Activated B cell treated with CpG ODN at 0.5 μM for 24 hours (primary cell): ENCODE measurements at regions of chr18 and their contacts with region 1.

Region 1: GRCh38 chr18:47930931-47931717 is 665 bp upstream of the SMAD2 start:
- DNase-seq: peak; percentile 93
- ATAC-seq: peak; percentile 80
- H3K4me3 Mint-ChIP-seq: peak overlapping the region; percentile 84
- H3K27ac Mint-ChIP-seq: peak overlapping the region; percentile 87
- H3K4me1 Mint-ChIP-seq: peaks cover 36% of the 10 kb centered on the region
- H3K27me3 Mint-ChIP-seq: no peaks in the 10 kb centered on the region
- CTCF ChIP-seq: no peak

Region 2: DNA sequence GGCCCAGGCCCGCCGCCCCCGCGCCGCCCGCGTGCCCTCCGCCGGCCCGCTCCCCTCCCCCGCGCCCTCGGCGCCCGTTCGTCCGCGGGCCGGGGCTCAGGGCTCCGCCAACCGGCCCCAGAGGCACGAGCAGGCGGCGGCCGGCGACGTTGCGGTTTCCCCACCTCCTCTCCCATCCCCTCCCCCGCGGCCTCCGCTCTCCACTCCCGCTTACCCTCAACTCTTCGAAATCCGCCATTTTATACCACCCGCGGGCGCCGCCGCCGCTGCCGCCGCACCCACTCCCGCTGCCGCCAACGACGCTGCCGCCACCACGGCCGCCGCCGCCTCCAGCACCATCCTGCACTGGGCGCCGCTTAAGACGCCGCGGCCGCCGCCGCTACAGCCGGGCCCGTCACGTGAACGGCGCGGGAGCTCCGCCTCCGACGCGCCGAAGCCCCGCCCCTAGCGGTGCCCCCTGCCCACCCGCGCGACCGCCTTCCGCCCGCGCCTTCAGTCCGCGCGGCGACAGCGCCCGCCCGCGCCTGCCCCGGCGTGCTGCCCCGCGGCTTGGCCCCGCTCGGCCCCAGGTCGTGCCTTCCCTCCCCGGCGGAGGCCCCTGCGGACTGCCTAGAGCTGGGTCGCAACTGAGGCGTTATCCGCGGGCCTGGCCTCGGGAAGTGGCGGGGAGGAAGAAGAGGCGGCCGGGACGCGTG is 1013.9 kb before region 1 on chr18 and contains the starts of genes KATNAL2 and PIAS2:
- CTCF ChIA-PET with region 1: no interaction called
- POLR2A ChIA-PET with region 1: no interaction called
- intact Hi-C with region 1: loop called (anchors 1 kb)
- DNase-seq: peak; percentile 85
- ATAC-seq: peak; percentile 93
- H3K4me3 Mint-ChIP-seq: peak within 1 kb of the TSS; percentile 87
- H3K27ac Mint-ChIP-seq: peak within 1 kb of the TSS; percentile 79
- H3K4me1 Mint-ChIP-seq: peaks cover 30% of the 10 kb centered on the region
- H3K27me3 Mint-ChIP-seq: no peaks in the 10 kb centered on the region
- CTCF ChIP-seq: no peak
- total RNA-seq, gene KATNAL2: 1.2 and 2.6 TPM in 2 replicates
- total RNA-seq, gene PIAS2: 34.2 and 36.0 TPM in 2 replicates

Region 3: DNA sequence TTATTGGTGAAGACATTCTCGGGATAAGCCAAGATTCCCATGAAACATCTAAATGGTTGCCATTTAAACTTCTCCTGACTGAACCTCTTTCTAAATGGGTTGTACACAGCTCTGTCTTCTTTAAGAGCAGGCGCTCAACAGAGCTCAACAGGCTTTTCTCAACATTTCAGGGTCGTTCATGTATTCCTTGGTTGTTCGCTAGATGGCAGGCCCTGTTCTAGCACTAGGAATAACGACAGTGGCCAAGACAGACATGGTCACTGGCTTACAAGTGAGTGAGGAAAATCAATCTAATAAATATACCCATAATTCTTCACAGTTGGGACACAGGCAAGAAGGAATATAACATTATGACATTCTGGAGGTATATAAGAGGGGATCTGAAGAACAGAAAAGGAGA is 155.2 kb before region 1 on chr18:
- CTCF ChIA-PET with region 1: no interaction called
- POLR2A ChIA-PET with region 1: no interaction called
- intact Hi-C with region 1: no loop called
- DNase-seq: no peak
- ATAC-seq: no peak
- H3K4me3 Mint-ChIP-seq: no peak overlapping the region
- H3K27ac Mint-ChIP-seq: no peak overlapping the region
- H3K4me1 Mint-ChIP-seq: no peaks in the 10 kb centered on the region
- H3K27me3 Mint-ChIP-seq: peaks cover 15% of the 10 kb centered on the region
- CTCF ChIP-seq: no peak

Region 4: GRCh38 chr18:47883771-47884413 is 47.2 kb before region 1 on chr18:
- CTCF ChIA-PET with region 1: no interaction called
- POLR2A ChIA-PET with region 1: no interaction called
- intact Hi-C with region 1: no loop called
- DNase-seq: no peak
- ATAC-seq: no peak
- H3K4me3 Mint-ChIP-seq: no peak overlapping the region
- H3K27ac Mint-ChIP-seq: no peak overlapping the region
- H3K4me1 Mint-ChIP-seq: peaks cover 4% of the 10 kb centered on the region
- H3K27me3 Mint-ChIP-seq: no peaks in the 10 kb centered on the region
- CTCF ChIP-seq: no peak

Region 5: DNA sequence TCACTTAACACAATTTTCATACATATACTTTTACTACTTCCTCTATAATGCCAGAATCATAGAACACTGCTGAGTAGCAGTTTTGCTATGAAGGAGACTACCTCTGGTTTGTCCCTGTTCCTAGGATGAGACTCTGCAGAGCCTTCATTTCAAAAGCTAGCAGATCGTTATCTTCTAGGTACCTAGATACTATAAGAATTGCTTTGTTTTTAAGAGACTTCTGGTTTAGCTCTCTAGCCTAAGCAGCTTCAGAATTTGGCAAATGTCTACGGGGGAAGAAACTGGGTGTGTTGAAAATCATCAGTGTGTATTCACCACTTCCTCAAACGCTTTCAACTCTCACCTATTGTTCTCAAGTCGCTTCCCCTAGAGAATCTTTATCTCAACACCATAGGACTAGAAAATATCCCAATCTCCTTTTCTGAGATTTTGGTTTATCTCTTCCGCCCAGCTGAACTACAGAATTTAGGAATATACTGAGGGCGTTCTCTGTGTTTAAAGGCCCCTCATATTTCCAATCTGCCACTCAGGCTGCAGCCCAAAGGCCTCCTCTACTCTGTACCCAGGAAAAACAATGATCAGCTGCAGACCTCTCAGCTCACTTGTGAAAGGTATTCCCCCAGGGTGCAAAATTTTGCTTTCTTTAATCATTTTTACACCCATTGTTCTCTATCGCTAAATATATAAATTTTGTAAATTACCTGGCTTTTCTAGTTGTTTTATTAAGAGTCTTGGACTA is 29.3 kb before region 1 on chr18:
- CTCF ChIA-PET with region 1: no interaction called
- POLR2A ChIA-PET with region 1: interaction called, 13 read pairs
- intact Hi-C with region 1: loop called (anchors 1 kb)
- DNase-seq: no peak
- ATAC-seq: peak; percentile 91
- H3K4me3 Mint-ChIP-seq: peak overlapping the region; percentile 17
- H3K27ac Mint-ChIP-seq: peak overlapping the region; percentile 42
- H3K4me1 Mint-ChIP-seq: peaks cover 25% of the 10 kb centered on the region
- H3K27me3 Mint-ChIP-seq: peaks cover 23% of the 10 kb centered on the region
- CTCF ChIP-seq: no peak

Region 6: GRCh38 chr18:48007955-48008701 is 77.0 kb after region 1 on chr18:
- CTCF ChIA-PET with region 1: no interaction called
- POLR2A ChIA-PET with region 1: no interaction called
- intact Hi-C with region 1: loop called (anchors 1 kb)
- DNase-seq: peak; percentile 31
- ATAC-seq: peak; percentile 82
- H3K4me3 Mint-ChIP-seq: peak overlapping the region; percentile 71
- H3K27ac Mint-ChIP-seq: no peak overlapping the region
- H3K4me1 Mint-ChIP-seq: peaks cover 14% of the 10 kb centered on the region
- H3K27me3 Mint-ChIP-seq: peaks cover 47% of the 10 kb centered on the region
- CTCF ChIP-seq: no peak

Region 7: DNA sequence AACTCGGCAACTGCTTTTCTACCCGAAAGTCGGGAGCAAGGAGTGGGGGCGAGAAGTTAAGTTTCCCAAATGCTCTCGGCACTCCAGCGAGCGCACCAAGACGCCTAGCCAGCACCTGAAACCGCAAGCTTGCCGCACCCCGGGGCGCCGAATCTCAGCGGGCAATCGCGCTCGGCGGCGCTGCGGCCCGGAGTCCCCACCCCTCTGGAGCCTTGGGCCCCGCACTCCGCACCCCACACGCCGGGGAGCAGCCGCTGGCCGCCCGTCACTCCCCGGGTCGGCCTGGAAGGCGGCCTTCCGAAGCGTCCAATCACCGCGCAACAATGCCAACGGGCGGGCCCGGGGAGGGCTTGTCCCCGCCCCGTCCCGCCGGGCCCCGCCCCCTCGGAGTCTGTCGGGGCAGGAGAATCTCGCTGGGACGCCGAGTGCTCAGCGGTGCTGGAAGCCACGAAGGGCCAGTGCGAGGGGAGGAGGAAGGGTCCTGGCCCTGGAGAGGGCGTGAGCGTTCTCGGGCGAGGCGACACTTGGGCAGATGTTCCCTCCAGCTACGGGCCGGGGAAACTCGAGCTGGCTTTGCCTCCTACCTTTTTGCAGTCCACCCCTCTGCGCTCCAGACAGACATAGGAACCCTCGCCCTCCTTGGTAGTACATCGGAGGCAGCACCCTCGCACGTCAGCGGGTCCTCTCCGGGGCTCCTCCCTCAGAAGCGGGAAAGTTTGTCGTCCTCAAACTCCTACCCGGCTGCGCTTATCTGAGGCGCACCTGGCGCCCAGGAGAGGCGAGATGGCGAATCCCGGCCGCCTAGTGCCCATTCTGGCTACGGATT is 479.2 kb after region 1 on chr18:
- CTCF ChIA-PET with region 1: no interaction called
- POLR2A ChIA-PET with region 1: no interaction called
- intact Hi-C with region 1: loop called (anchors 1 kb)
- DNase-seq: peak; percentile 49
- ATAC-seq: peak; percentile 93
- H3K4me3 Mint-ChIP-seq: peak overlapping the region; percentile 66
- H3K27ac Mint-ChIP-seq: no peak overlapping the region
- H3K4me1 Mint-ChIP-seq: peaks cover 14% of the 10 kb centered on the region
- H3K27me3 Mint-ChIP-seq: peaks cover 65% of the 10 kb centered on the region
- CTCF ChIP-seq: no peak

Region 8: DNA sequence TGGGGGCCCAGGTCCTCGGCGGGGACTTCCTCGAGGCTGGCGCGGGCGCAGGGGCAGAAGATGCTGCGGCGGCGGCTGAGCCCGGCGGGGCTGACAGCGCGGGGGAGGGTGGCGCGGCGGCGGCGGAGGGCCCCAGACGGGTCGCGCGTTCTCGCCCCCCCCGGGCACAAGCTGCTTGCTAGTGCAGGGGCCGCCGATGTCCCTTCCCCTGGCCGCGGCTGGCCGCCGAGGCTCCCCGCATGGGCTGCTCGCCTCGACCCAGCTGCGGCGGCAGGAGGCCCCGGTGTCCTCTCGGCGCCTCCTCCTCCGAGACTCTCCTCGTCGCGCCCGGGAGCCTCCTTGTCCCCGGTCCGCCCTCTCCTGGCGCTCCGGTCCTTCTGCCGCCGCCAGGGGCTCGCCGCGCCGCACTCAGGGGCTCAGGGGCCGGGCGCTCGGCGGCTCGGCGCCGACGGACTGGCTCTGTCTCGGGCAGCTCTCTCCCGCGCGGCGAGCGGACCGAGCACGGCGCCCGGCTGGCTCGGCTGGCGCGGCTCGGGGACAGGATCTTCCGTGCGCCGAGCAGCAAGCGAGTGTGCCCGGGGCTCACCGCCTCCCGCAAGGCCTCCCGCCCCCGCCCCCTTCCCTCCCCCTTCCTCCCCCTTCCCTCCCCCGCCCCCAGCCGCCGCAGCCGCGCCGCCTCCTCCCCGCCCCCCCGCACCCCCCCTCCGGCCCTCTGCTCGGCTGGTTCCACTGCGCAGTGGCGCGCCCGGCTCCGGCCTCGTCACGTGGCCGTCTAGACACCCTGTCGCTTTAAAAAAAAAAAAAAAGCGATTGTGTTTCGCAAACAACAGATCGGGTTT is 1020.5 kb after region 1 on chr18:
- CTCF ChIA-PET with region 1: no interaction called
- POLR2A ChIA-PET with region 1: interaction called, 15 read pairs
- intact Hi-C with region 1: no loop called
- DNase-seq: peak; percentile 77
- ATAC-seq: peak; percentile 46
- H3K4me3 Mint-ChIP-seq: peak overlapping the region; percentile 95
- H3K27ac Mint-ChIP-seq: peak overlapping the region; percentile 98
- H3K4me1 Mint-ChIP-seq: peaks cover 32% of the 10 kb centered on the region
- H3K27me3 Mint-ChIP-seq: no peaks in the 10 kb centered on the region
- CTCF ChIP-seq: no peak

Region 9: DNA sequence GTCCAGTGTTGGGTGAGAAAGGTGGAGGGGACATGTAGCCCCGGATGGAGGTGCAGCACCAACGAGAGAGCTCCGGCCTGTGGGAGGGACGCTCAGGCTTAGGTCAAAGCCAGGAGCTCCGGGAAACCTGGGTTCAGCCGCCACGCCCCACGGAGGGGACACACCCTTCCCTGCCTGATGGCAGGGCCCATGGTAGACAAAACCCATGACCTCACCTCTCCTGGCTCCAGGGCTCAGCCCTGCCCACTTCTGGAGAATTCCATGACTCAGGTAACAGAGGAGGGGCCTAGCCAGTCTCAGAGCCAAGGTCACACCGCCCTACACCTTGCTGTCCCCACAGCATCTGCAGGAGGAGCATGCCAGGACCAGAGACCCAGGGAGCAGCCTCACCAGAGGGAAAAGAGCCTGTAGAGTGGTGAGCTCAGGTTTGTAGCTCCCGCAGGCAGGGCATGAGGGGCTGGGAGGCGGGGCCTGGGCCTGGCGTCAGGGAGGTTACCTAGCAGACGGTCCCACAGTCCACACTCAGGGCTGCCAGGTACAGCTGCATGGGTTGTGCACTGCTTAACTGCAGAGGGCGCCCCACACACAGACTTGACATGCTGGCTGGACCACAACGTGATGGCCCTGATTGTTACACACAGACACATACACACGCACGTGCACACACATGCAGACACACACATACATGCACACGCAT is 1090.5 kb after region 1 on chr18:
- CTCF ChIA-PET with region 1: no interaction called
- POLR2A ChIA-PET with region 1: no interaction called
- intact Hi-C with region 1: no loop called
- DNase-seq: no peak
- ATAC-seq: no peak
- H3K4me3 Mint-ChIP-seq: no peak overlapping the region
- H3K27ac Mint-ChIP-seq: no peak overlapping the region
- H3K4me1 Mint-ChIP-seq: peaks cover 51% of the 10 kb centered on the region
- H3K27me3 Mint-ChIP-seq: no peaks in the 10 kb centered on the region
- CTCF ChIP-seq: no peak